IMR-90 (cell line): ENCODE measurements at regions of chr5 and their contacts with region 1.

Region 1: DNA sequence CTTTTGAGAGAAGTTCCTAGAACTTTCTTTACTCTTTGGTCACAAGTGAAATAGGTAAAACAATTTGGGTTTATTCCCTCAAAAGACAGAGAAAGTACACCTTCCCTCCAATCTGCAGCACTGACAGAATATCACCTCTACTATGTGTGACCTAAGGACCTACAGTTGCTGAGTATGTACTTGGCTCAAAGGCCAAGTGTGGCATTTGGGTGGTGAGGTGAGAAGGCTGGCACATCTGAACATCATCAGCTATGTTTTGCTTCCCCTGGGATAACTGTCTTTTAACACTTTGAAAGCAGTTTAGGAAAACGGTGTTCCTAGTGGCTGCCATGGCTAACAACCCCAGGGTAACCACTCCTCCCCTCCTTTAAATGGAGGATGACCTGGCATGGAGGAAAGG is 17.6 kb downstream of the MIER3 start:
- DNase-seq: no peak
- ATAC-seq: no peak
- H3K4me3 ChIP-seq: no peak overlapping the region
- H3K27ac ChIP-seq: no peak overlapping the region
- H3K4me1 ChIP-seq: no peaks in the 10 kb centered on the region
- H3K27me3 ChIP-seq: no peaks in the 10 kb centered on the region
- CTCF ChIP-seq: no peak
- POLR2A ChIP-seq: no peak
- RAD21 ChIP-seq: no peak

Region 2: DNA sequence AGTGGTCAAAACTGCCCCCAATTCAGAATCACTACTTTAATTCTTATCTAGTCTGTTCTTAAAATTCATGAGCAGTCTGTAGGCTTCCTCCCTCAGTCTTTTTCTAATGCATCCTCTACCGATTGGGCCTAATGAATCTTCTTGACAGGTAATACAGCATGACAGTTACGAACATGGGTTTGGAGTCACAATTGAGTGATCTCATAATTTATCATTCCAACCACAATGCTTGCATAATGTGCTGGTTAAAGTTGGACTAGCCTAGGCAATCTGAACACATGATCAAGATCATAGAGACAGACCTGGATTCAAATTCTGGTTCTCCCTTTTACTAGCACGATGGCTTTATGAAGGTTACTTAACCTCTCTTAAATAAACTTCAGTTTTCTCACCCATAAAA is 58.0 kb before region 1 on chr5:
- CTCF ChIA-PET with region 1: no interaction called
- POLR2A ChIA-PET with region 1: no interaction called
- dilution Hi-C with region 1: no loop called
- in situ Hi-C with region 1: no loop called
- intact Hi-C with region 1: loop called (anchors 5 kb)
- DNase-seq: peak; percentile 14
- ATAC-seq: no peak
- H3K4me3 ChIP-seq: no peak overlapping the region
- H3K27ac ChIP-seq: no peak overlapping the region
- H3K4me1 ChIP-seq: no peaks in the 10 kb centered on the region
- H3K27me3 ChIP-seq: no peaks in the 10 kb centered on the region
- CTCF ChIP-seq: no peak
- POLR2A ChIP-seq: no peak
- RAD21 ChIP-seq: no peak

Region 3: DNA sequence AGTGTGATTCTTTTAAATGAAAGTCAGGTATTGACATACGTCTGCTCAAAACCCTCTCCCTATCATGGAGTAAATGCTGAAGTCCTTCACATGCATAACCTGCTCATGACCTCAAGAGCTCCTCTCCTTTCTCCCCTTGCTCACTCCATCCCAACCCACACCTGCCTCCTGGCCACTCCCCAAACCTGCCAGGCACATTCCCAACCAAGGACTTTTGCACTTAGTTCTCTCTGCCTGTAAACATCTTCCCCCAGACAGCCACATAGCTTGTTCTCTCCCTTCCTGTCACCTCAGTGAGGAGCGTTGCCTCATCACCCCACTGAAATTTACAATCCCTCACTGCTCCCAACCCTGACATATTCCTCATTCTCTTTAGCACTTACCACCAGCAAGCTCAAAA is 16.3 kb before region 1 on chr5:
- CTCF ChIA-PET with region 1: no interaction called
- POLR2A ChIA-PET with region 1: no interaction called
- dilution Hi-C with region 1: no loop called
- in situ Hi-C with region 1: no loop called
- intact Hi-C with region 1: no loop called
- DNase-seq: no peak
- ATAC-seq: no peak; the same call in 1 of the 2 replicates
- H3K4me3 ChIP-seq: no peak overlapping the region
- H3K27ac ChIP-seq: no peak overlapping the region
- H3K4me1 ChIP-seq: no peaks in the 10 kb centered on the region
- H3K27me3 ChIP-seq: no peaks in the 10 kb centered on the region
- CTCF ChIP-seq: no peak
- POLR2A ChIP-seq: no peak
- RAD21 ChIP-seq: no peak

Region 4: DNA sequence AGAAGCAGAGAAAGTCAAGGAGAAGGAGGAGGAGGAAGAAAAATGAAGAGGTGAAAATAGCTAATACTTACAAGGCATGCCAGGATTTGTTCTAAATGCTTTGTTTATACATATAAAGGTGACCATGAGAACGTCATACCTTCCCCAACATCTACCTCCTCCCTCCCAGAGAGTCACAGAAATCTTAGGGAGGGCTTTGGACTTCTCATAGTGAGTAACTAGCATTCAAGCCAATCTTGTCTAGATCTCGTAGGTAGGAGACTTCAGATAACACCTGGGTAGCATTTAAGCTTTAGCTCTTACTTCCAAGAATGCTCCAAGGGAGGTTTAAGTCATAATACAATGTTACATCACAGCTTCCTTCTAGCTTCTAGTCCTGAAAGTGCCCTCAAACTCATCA is 203.1 kb after region 1 on chr5:
- CTCF ChIA-PET with region 1: no interaction called
- POLR2A ChIA-PET with region 1: no interaction called
- dilution Hi-C with region 1: no loop called
- in situ Hi-C with region 1: no loop called
- intact Hi-C with region 1: no loop called
- DNase-seq: no peak
- ATAC-seq: no peak
- H3K4me3 ChIP-seq: no peak overlapping the region
- H3K27ac ChIP-seq: no peak overlapping the region
- H3K4me1 ChIP-seq: no peaks in the 10 kb centered on the region
- H3K27me3 ChIP-seq: peaks cover 1% of the 10 kb centered on the region; the same call in 1 of the 2 replicates
- CTCF ChIP-seq: no peak
- POLR2A ChIP-seq: no peak
- RAD21 ChIP-seq: no peak